Ascending aorta (tissue), 2 donors: ENCODE measurements at regions of chr2 and their contacts with region 1.

Region 1: GRCh38 chr2:99180755-99181623 is at the starts of genes MITD1 and MRPL30:
- DNase-seq: peak; percentile 72 to 95
- H3K4me3 ChIP-seq: peak within 1 kb of the TSS; percentile 65 to 89
- H3K27ac ChIP-seq: peak within 1 kb of the TSS; percentile 66 to 70
- H3K4me1 ChIP-seq: peaks cover 0 to 20% of the 10 kb centered on the region in 2 donors
- H3K27me3 ChIP-seq: no peaks in the 10 kb centered on the region
- CTCF ChIP-seq: no peak
- total RNA-seq, gene MITD1: 13.3 TPM
- total RNA-seq, gene MRPL30: 32.6 TPM

Region 2: GRCh38 chr2:99141110-99142108 is 39.6 kb before region 1 on chr2 and contains the start of gene C2orf15:
- intact Hi-C with region 1: loop called (anchors 1 kb)
- DNase-seq: peak; percentile 74 to 96
- H3K4me3 ChIP-seq: peak within 1 kb of the TSS; percentile 80 to 95
- H3K27ac ChIP-seq: peak within 1 kb of the TSS; percentile 71 to 86
- H3K4me1 ChIP-seq: peaks cover 0 to 4% of the 10 kb centered on the region in 2 donors
- H3K27me3 ChIP-seq: no peaks in the 10 kb centered on the region
- CTCF ChIP-seq: no peak
- total RNA-seq, gene C2orf15: 0.32 TPM

Region 3: GRCh38 chr2:99342536-99342935 is 161.5 kb after region 1 on chr2:
- intact Hi-C with region 1: no loop called
- DNase-seq: no peak
- H3K4me3 ChIP-seq: no peak overlapping the region
- H3K27ac ChIP-seq: no peak overlapping the region
- H3K4me1 ChIP-seq: peaks cover 0 to 7% of the 10 kb centered on the region in 2 donors
- H3K27me3 ChIP-seq: no peaks in the 10 kb centered on the region
- CTCF ChIP-seq: no peak

Region 4: DNA sequence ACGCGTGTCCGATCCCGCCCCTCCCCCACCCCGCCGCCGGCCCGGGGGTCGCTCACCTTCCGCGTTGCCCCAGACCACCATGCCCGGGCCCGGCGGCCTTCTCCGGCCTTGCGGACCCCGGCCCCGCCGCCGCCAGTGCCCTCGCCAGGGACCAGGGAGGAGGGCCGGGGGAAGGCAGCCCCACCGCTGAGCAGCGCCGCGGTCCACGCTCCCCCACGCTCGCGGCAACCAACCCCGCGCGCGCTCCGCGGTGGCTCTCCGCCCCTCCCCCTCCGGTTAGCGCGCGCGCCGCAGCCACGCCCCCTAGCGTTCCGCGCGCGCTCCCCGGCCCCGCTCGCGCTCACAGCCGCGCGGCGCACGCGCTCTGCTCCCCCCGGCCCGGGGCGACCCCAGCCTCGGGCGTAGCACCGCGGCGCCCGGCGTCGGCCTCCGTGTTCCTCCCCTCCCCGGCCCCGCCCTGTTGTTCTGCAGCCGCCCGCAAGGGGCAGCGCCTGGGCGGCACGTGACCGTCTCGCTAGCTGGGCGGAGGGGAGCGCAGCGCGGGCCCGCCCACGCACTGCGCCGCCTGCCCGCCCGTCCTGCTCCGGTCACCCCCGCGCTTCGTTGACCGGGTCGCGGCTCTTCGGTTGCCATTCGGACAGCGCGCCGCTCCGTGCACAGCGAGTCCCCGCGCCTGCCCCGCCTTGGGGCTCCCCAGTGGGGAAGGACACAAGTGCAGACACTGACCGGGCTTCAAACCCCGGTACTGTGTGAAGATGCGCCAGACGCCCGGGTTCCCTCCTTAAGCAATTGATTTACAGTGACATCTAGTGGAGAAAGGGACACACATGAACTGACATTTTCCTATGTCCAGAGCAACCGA is 309.0 kb after region 1 on chr2 and contains the start of gene REV1:
- intact Hi-C with region 1: loop called (anchors 2 kb)
- DNase-seq: peak; percentile 70 to 95
- H3K4me3 ChIP-seq: peak within 1 kb of the TSS; percentile 99 to 100
- H3K27ac ChIP-seq: peak within 1 kb of the TSS; percentile 89 to 99
- H3K4me1 ChIP-seq: peaks cover 0 to 14% of the 10 kb centered on the region in 2 donors
- H3K27me3 ChIP-seq: no peaks in the 10 kb centered on the region
- CTCF ChIP-seq: peak; percentile 74 to 91 (median 80)
- total RNA-seq, gene REV1: 26.8 TPM